CD4-positive, alpha-beta memory T cell (primary cell): ENCODE measurements at regions of chr6 and their contacts with region 1.

Region 1: DNA sequence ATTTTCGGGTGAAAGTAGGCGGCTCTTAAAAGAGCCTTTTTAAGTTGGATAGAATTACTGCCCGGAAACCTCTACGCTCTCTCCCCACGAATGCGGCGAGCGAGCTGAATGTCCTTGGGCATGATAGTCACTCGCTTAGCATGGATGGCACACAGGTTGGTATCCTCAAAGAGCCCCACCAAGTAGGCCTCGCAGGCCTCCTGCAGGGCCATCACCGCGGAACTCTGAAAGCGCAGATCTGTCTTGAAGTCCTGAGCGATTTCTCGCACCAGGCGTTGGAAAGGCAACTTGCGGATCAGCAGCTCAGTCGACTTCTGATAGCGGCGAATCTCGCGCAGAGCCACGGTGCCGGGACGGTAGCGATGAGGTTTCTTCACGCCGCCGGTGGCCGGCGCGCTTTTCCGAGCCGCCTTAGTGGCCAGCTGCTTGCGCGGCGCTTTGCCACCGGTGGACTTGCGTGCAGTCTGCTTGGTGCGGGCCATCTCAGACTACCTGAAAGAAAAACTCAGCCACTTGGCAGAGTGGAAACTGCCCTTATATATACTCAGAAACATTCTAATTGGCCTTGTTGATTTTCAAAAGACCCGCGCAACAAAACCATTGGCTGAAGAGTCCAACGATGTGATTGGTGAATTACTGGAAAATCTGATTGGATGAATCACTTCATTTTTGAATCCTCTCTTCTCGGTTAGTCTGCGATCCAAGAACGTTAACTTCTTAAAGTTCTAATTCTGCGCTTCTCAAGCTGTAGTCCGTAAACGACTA is 93.9 kb upstream of the BTN3A2 start:
- DNase-seq: peak; percentile 84 to 87 (median 85)
- H3K4me3 ChIP-seq: peak overlapping the region; percentile 53 to 65
- H3K4me3 Mint-ChIP-seq: peak overlapping the region in 1 of 8 donors; percentile 85
- H3K27ac ChIP-seq: peak overlapping the region; percentile 83
- H3K27ac Mint-ChIP-seq: peak overlapping the region in 5 of 7 donors; percentile 68 to 97 (median 82)
- H3K4me1 ChIP-seq: peaks cover 31% of the 10 kb centered on the region
- H3K4me1 Mint-ChIP-seq: peaks cover 0 to 22% (median 15%) of the 10 kb centered on the region in 4 donors
- H3K27me3 ChIP-seq: no peaks in the 10 kb centered on the region
- H3K27me3 Mint-ChIP-seq: no peaks in the 10 kb centered on the region

Region 2: GRCh38 chr6:26054857-26055669 is 216.0 kb before region 1 on chr6:
- CTCF ChIA-PET with region 1: no interaction called
- POLR2A ChIA-PET with region 1: interaction called, 28 read pairs
- intact Hi-C with region 1: no loop called
- DNase-seq: peak; percentile 89 to 96 (median 91)
- H3K4me3 ChIP-seq: peak overlapping the region; percentile 67 to 78
- H3K4me3 Mint-ChIP-seq: peak overlapping the region; percentile 93 to 96 (median 94)
- H3K27ac ChIP-seq: peak overlapping the region; percentile 84
- H3K27ac Mint-ChIP-seq: peak overlapping the region; percentile 91 to 98 (median 98)
- H3K4me1 ChIP-seq: peaks cover 24% of the 10 kb centered on the region
- H3K4me1 Mint-ChIP-seq: peaks cover 7 to 34% (median 15%) of the 10 kb centered on the region in 4 donors
- H3K27me3 ChIP-seq: no peaks in the 10 kb centered on the region
- H3K27me3 Mint-ChIP-seq: no peaks in the 10 kb centered on the region

Region 3: DNA sequence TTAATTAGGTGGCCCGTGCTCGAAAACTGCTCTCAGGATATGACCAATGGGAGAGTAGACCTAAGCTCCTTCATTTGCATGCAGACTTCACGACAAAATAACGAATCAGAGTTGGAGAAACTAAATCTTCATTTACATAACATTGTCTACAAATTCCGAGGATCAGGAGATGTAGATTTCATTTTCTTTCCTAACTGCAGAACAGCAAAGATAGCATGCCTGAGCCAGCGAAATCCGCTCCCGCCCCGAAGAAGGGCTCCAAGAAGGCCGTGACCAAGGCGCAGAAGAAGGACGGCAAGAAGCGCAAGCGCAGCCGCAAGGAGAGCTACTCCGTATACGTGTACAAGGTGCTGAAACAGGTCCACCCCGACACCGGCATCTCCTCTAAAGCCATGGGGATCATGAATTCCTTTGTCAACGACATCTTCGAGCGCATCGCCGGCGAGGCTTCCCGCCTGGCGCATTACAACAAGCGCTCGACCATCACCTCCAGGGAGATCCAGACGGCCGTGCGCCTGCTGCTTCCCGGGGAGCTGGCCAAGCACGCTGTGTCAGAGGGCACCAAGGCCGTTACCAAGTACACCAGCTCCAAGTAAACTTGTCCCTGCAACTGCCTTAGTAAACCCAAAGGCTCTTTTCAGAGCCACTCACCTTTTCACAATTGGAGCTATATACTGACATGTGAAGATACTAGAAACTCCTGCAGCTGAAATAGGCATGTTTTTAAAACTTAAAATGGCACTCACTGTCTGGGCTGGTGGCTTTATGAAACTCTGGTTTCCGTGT is 87.3 kb before region 1 on chr6:
- CTCF ChIA-PET with region 1: interaction called, 15 read pairs
- POLR2A ChIA-PET with region 1: interaction called, 100 read pairs
- intact Hi-C with region 1: no loop called
- DNase-seq: peak; percentile 72 to 81 (median 79)
- H3K4me3 ChIP-seq: peak overlapping the region; percentile 2 to 69
- H3K4me3 Mint-ChIP-seq: peak overlapping the region; percentile 90 to 100 (median 96)
- H3K27ac ChIP-seq: peak overlapping the region; percentile 67
- H3K27ac Mint-ChIP-seq: peak overlapping the region; percentile 78 to 99 (median 95)
- H3K4me1 ChIP-seq: peaks cover 45% of the 10 kb centered on the region
- H3K4me1 Mint-ChIP-seq: peaks cover 29 to 54% (median 37%) of the 10 kb centered on the region in 4 donors
- H3K27me3 ChIP-seq: no peaks in the 10 kb centered on the region
- H3K27me3 Mint-ChIP-seq: no peaks in the 10 kb centered on the region

Region 4: DNA sequence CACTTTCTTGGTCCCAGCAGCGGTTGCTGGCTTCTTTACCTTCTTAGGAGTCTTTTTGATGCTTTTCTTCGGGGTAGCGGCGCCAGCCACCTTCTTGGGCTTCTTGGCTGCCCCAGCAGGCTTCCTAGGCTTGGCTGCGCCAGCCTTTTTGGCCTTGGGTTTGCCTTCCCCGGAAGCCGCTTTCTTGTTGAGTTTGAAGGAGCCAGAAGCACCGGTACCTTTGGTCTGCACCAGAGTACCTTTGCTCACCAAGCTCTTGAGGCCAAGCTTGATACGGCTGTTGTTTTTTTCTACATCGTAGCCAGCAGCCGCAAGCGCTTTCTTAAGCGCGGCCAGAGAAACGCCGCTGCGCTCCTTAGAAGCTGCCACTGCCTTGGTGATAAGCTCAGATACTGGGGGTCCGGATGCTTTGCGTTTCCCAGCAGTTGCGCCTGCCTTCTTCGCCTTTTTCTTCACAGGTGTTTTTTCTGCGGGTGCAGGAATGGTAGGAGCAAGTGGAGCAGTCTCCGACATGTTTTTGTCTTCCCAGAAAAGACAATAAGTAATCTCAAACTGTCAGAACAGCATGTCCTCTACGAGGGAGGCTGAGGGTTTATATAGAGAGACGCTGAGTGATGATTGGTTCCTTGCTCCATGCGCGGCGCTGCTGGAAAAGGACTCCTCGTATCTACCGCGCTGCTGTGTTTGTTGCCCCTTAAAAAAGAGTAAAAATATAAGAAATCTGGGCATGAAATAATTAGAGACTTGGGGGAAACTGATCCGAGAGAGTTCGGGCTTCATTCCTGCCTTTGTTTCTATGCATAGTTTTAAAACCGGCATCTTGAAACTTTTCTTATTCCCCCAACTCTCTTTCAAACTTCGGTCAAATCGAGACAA is 36.4 kb before region 1 on chr6:
- CTCF ChIA-PET with region 1: interaction called, 13 read pairs
- POLR2A ChIA-PET with region 1: interaction called, 330 read pairs
- intact Hi-C with region 1: loop called (anchors 1 kb)
- DNase-seq: peak; percentile 70 to 87 (median 85)
- H3K4me3 ChIP-seq: peak overlapping the region; percentile 66 to 95
- H3K4me3 Mint-ChIP-seq: peak overlapping the region; percentile 93 to 99 (median 96)
- H3K27ac ChIP-seq: peak overlapping the region; percentile 83
- H3K27ac Mint-ChIP-seq: peak overlapping the region; percentile 90 to 99 (median 96)
- H3K4me1 ChIP-seq: peaks cover 23% of the 10 kb centered on the region
- H3K4me1 Mint-ChIP-seq: peaks cover 18 to 43% (median 26%) of the 10 kb centered on the region in 4 donors
- H3K27me3 ChIP-seq: no peaks in the 10 kb centered on the region
- H3K27me3 Mint-ChIP-seq: no peaks in the 10 kb centered on the region

Region 5: DNA sequence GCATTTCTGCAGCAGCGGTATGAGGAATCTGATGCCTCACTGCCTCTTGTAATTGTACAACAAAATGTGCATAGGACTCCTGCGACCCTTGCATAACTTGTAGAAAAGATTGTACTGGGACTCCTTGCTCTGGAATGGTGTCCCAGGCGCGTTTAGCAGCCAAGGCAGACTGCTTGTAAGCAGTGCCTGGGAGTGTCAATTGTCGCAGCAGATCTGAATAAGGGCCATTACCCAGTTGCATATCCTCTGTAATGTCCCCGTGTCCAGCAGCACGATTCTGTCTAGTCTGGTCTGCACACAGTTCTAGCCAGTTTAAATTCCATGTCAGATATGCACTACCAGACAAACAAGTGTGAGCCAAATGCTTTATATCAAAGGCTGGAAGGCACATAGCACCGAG is 23.2 kb after region 1 on chr6:
- CTCF ChIA-PET with region 1: no interaction called
- POLR2A ChIA-PET with region 1: no interaction called
- intact Hi-C with region 1: no loop called
- DNase-seq: no peak
- H3K4me3 ChIP-seq: no peak overlapping the region
- H3K4me3 Mint-ChIP-seq: no peak overlapping the region
- H3K27ac ChIP-seq: no peak overlapping the region
- H3K27ac Mint-ChIP-seq: no peak overlapping the region
- H3K4me1 ChIP-seq: peaks cover 4% of the 10 kb centered on the region
- H3K4me1 Mint-ChIP-seq: peaks cover 2 to 9% (median 4%) of the 10 kb centered on the region in 4 donors
- H3K27me3 ChIP-seq: no peaks in the 10 kb centered on the region
- H3K27me3 Mint-ChIP-seq: peaks cover 2 to 4% of the 10 kb centered on the region in 2 donors

Region 6: GRCh38 chr6:26304797-26305640 is 33.9 kb after region 1 on chr6:
- CTCF ChIA-PET with region 1: no interaction called
- POLR2A ChIA-PET with region 1: interaction called, 18 read pairs
- intact Hi-C with region 1: no loop called
- DNase-seq: peak; percentile 48 to 80 (median 74)
- H3K4me3 ChIP-seq: peak overlapping the region; percentile 33 to 59
- H3K4me3 Mint-ChIP-seq: peak overlapping the region; percentile 86 to 97 (median 93)
- H3K27ac ChIP-seq: peak overlapping the region; percentile 51
- H3K27ac Mint-ChIP-seq: peak overlapping the region in 6 of 7 donors; percentile 92 to 96 (median 94)
- H3K4me1 ChIP-seq: peaks cover 19% of the 10 kb centered on the region
- H3K4me1 Mint-ChIP-seq: peaks cover 19 to 41% (median 31%) of the 10 kb centered on the region in 4 donors
- H3K27me3 ChIP-seq: no peaks in the 10 kb centered on the region
- H3K27me3 Mint-ChIP-seq: peaks cover 0 to 2% of the 10 kb centered on the region in 2 donors

Region 7: DNA sequence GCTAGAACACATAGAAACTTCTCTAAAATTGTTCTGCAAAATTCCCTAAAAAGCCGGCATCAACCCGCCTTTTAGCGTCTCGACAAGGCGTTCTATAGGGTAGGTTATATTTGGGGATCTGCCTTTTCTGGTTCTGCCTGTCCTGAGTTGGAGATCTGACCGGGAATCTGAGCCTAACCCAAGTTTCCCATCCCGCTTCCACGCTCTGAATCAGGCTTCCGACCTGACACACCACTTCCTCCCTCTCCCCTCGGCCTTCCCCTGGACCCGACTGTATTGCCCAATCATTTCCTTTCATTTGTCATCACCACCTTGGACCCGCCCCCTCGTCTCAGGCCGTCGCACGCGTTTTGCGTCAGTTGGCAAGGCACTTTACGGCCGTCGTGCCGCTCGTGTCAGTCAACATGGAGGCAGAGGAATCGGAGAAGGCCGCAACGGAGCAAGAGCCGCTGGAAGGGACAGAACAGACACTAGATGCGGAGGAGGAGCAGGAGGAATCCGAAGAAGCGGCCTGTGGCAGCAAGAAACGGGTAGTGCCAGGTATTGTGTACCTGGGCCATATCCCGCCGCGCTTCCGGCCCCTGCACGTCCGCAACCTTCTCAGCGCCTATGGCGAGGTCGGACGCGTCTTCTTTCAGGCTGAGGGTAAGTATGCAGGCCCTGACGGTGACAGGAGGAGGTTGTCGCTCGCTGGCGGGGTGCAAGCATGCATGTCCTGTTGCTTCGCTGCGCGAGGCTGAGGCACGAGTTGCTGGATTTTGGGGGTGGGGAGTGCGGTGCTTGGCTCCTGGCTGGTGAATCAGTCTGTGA is 325.7 kb after region 1 on chr6 and contains the start of gene ABT1:
- CTCF ChIA-PET with region 1: interaction called, 8 read pairs
- POLR2A ChIA-PET with region 1: interaction called, 9 read pairs
- intact Hi-C with region 1: loop called (anchors 1 kb)
- DNase-seq: peak; percentile 95 to 98 (median 96)
- H3K4me3 ChIP-seq: peak within 1 kb of the TSS; percentile 76 to 98
- H3K4me3 Mint-ChIP-seq: no peak within 1 kb of the TSS
- H3K27ac ChIP-seq: peak within 1 kb of the TSS; percentile 91
- H3K27ac Mint-ChIP-seq: peak within 1 kb of the TSS in 3 of 7 donors; percentile 80 to 92 (median 88)
- H3K4me1 ChIP-seq: peaks cover 24% of the 10 kb centered on the region
- H3K4me1 Mint-ChIP-seq: peaks cover 0 to 16% (median 8%) of the 10 kb centered on the region in 4 donors
- H3K27me3 ChIP-seq: no peaks in the 10 kb centered on the region
- H3K27me3 Mint-ChIP-seq: peaks cover 15 to 22% of the 10 kb centered on the region in 2 donors
- total RNA-seq, gene ABT1: 33.5 to 34.8 TPM

Region 8: DNA sequence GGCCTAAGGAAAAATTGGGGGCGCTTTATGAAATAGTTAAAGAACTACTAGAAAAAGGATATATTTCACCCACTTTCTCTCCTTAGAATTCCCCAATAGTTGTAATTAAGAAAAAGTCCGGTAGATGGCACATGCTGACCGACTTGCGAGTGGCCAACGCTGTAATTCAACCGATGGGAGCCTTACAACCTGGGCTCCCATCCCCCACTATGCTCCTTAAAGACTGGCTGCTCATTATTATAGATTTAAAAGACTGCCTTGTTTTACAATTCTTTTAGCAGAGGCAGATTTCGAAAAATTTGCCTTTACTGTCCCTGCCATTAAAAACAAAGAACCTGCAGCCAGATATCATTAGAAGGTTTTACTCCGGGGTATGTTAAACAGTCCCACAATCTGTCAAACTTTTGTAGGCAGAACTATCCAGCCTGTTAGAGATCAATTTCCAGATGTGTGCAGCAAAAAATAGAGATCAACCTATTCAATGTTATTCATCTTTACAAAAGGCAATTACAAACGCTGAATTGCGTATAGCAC is 917.9 kb after region 1 on chr6:
- CTCF ChIA-PET with region 1: no interaction called
- POLR2A ChIA-PET with region 1: no interaction called
- intact Hi-C with region 1: no loop called
- DNase-seq: peak; percentile 55 to 69 (median 67)
- H3K4me3 ChIP-seq: peak overlapping the region; percentile 58 to 73
- H3K4me3 Mint-ChIP-seq: peak overlapping the region; percentile 79 to 96 (median 93)
- H3K27ac ChIP-seq: peak overlapping the region; percentile 44
- H3K27ac Mint-ChIP-seq: peak overlapping the region; percentile 49 to 86 (median 73)
- H3K4me1 ChIP-seq: peaks cover 9% of the 10 kb centered on the region
- H3K4me1 Mint-ChIP-seq: peaks cover 2 to 20% (median 15%) of the 10 kb centered on the region in 4 donors
- H3K27me3 ChIP-seq: no peaks in the 10 kb centered on the region
- H3K27me3 Mint-ChIP-seq: no peaks in the 10 kb centered on the region

Region 9: DNA sequence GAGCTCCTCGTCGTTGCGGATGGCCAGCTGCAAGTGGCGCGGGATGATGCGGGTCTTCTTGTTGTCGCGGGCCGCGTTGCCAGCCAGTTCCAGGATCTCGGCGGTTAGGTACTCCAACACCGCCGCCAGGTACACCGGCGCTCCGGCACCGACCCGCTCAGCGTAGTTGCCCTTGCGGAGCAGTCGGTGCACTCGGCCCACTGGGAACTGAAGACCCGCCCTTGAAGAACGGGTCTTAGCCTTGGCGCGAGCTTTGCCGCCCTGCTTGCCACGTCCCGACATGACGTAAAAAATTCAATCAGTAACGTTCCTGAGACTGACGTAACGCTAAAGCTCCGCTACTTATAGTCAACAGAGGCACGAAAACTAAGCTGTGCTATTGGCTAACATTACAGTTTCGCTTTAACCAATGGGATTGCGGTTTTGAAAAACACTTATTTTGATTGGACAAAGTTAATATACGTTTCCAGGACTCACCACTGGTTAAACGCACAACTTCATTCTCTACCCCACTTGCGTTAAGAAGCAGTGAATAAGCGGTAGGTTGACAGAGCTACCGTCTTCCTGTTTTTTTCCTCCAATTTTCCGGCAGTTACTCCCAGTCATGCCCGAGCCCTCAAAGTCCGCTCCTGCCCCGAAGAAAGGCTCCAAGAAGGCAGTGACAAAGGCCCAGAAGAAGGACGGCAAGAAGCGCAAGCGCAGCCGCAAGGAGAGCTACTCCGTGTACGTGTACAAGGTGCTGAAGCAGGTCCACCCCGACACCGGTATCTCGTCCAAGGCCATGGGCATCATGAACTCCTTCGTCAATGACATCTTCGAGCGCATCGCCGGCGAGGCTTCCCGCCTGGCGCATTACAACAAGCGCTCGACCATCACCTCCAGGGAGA is 1567.2 kb after region 1 on chr6:
- CTCF ChIA-PET with region 1: no interaction called
- POLR2A ChIA-PET with region 1: interaction called, 27 read pairs
- intact Hi-C with region 1: no loop called
- DNase-seq: peak; percentile 91 to 94 (median 92)
- H3K4me3 ChIP-seq: peak overlapping the region; percentile 63 to 67
- H3K4me3 Mint-ChIP-seq: no peak overlapping the region
- H3K27ac ChIP-seq: peak overlapping the region; percentile 93
- H3K27ac Mint-ChIP-seq: no peak overlapping the region
- H3K4me1 ChIP-seq: peaks cover 30% of the 10 kb centered on the region
- H3K4me1 Mint-ChIP-seq: peaks cover 6 to 20% (median 12%) of the 10 kb centered on the region in 4 donors
- H3K27me3 ChIP-seq: no peaks in the 10 kb centered on the region
- H3K27me3 Mint-ChIP-seq: peaks cover 2 to 3% of the 10 kb centered on the region in 2 donors